ENCODE measurements at regions of chr20 and their contacts with region 1.

Region 1: GRCh38 chr20:47356526-47357295 is at the start of gene ZMYND8:
- DNase-seq: peak; percentile 92
- ATAC-seq: peak; percentile 64
- H3K4me3 ChIP-seq: peak within 1 kb of the TSS; percentile 37
- H3K27ac ChIP-seq: peak within 1 kb of the TSS; percentile 98
- H3K4me1 ChIP-seq: peaks cover 100% of the 10 kb centered on the region
- H3K27me3 ChIP-seq: no peaks in the 10 kb centered on the region
- CTCF ChIP-seq: no peak
- total RNA-seq, gene ZMYND8: 45.7 TPM

Region 2: DNA sequence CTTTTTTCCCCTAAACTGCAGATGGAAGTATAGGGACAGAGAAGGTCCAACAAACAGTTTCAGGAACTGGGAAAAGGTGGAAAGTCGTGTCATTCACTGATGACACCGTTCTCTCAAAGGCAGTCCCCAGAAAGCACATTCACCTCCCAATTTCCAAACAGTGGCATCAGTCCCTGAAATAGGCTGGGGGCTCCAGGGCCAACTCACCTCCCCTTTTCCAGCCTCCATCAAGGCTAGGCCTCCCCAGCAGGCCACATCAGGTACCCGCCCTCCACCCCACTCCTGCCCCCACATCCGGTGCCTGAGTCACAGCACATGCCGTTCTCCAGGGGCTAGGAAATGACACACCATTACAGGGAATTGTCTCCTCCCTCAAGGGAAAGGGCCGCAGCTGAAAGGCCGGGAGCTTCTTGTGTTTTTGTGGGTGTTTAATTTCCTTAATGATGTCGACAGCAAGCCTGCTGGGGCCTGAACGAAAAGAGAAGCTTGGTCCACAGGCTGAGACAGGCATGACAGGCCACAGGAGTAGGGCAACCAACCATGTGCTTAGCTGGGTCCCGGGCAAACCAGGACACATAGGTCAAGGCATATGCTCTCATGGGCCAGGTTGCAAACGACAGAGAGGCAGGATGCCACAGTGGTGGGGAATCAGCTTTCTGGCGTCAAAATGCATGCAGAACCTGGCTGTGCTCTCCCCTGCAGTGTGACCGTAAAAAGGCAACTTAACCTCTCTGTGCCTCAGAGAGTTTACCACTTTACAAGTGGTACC is 39.4 kb before region 1 on chr20:
- intact Hi-C with region 1: loop called (anchors 5 kb)
- DNase-seq: peak; percentile 91
- ATAC-seq: peak; percentile 76
- H3K4me3 ChIP-seq: peak overlapping the region; percentile 42
- H3K27ac ChIP-seq: peak overlapping the region; percentile 99
- H3K4me1 ChIP-seq: peaks cover 83% of the 10 kb centered on the region
- H3K27me3 ChIP-seq: no peaks in the 10 kb centered on the region
- CTCF ChIP-seq: no peak

Region 3: DNA sequence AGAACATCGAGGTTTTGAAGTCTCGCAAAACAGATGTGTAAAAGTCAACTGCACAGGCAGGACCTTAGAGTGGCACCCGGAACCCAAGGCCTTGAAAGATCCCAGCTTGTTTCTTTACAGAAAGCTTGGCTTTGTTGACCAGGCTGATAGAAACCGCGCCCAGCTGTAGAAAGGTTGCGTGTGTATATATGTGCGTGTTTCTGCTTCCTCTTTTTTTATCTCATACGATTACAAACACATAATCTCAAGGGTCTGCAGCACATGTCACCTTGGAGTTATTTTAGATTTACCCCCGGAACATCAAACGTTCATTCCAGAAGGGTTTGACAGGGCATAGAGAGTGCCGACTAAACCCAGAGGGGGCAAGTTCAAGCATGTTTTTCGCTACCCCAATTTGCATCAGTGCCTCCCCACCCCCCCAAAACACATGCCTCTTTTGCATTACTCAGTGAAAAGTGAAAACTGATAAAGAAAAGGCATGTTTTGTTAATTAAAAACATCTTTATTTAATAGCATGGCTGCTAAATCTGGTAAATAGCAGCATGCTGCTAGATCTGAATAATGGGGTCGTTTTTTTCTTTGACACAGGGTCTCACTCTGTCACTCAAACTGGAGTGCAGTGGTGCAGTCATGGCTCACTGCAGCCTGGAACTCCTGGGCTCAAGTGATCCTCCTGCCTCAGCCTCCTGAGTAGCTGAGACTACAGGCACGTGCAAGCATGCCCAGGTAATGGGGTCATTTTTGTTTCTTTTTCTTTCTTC is 111.8 kb after region 1 on chr20:
- intact Hi-C with region 1: no loop called
- DNase-seq: no peak
- ATAC-seq: no peak
- H3K4me3 ChIP-seq: no peak overlapping the region
- H3K27ac ChIP-seq: no peak overlapping the region
- H3K4me1 ChIP-seq: peaks cover 22% of the 10 kb centered on the region
- H3K27me3 ChIP-seq: no peaks in the 10 kb centered on the region
- CTCF ChIP-seq: no peak

Measured in upper lobe of right lung (tissue), 1 donor.